Heart left ventricle (tissue), 16 donors: ENCODE measurements at regions of chr17 and their contacts with region 1.

Region 1: GRCh38 chr17:43170766-43171585 is at the start of gene NBR1:
- DNase-seq: peak; percentile 93 to 95 (median 95)
- ATAC-seq: peak; percentile 92 to 94 (median 94)
- H3K4me3 ChIP-seq: peak within 1 kb of the TSS; percentile 58 to 86 (median 78)
- H3K27ac ChIP-seq: peak within 1 kb of the TSS; percentile 90 to 99 (median 96)
- H3K4me1 ChIP-seq: peaks cover 2 to 60% (median 48%) of the 10 kb centered on the region in 12 donors
- H3K27me3 ChIP-seq: no peaks in the 10 kb centered on the region
- CTCF ChIP-seq: peak in 6 of 12 donors; percentile 11 to 47 (median 35)
- POLR2A ChIP-seq: peak; percentile 4 to 82
- total RNA-seq, gene NBR1: 82.6 to 146 (median 105) TPM

Region 2: GRCh38 chr17:42964161-42964932 is 206.6 kb before region 1 on chr17 and contains the start of gene AARSD1:
- intact Hi-C with region 1: no loop called
- DNase-seq: peak; percentile 91 to 94 (median 93)
- ATAC-seq: peak; percentile 96 to 99 (median 97)
- H3K4me3 ChIP-seq: peak within 1 kb of the TSS; percentile 40 to 96 (median 77)
- H3K27ac ChIP-seq: peak within 1 kb of the TSS in 11 of 12 donors; percentile 72 to 92 (median 87)
- H3K4me1 ChIP-seq: peaks cover 0 to 14% (median 6%) of the 10 kb centered on the region in 12 donors
- H3K27me3 ChIP-seq: no peaks in the 10 kb centered on the region
- CTCF ChIP-seq: peak in 1 of 12 donors; percentile 13
- POLR2A ChIP-seq: peak in 1 of 2 donors; percentile 70
- total RNA-seq, gene AARSD1: 19.5 to 33.3 (median 26.2) TPM

Region 3: DNA sequence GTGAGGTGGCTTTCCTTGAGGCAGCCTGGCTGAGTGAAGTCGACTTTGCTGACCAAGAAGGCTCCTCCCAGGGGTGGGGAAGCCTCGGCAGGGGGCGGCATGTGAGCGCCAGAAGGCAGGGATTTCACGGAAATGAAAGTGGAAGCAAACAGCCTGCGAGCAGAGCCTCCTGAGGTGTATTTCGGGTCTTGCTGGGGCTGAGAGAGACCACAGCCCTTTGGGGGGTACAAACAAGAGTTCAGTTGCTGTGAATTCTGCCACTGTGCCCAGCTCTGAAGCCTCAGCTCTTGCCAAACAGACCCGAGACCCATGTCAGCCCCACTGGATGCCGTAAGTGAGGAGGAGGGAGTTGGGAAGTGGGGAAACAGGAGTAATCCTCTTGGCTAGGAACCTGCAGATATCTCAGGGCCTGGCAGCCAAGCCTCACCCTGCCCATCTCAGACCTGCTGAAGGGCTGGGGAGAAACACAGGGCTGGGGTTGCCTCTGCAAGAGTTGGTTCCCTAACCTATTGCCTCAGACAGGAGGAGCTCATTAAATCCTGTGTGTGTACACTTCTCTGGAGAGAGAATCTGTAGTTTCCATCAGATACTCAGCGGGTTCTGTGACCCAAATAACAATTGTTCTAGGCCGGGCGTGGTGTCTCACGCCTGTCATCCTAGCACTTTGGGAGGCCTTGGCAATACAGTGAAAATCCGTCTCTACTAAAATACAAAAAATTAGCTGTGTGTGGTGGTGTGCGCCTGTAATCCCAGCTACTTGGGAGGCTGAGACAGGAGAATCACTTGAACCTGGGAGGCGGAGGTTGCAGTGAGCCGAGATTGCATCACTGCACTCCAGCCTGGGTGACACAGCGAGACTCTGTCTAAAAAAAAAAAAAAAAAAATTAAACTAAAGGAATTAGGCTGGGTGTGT is 164.1 kb before region 1 on chr17 and contains the start of gene IFI35:
- intact Hi-C with region 1: loop called in 2 of 10 experiments (anchors 5 kb)
- DNase-seq: peak; percentile 87 to 90 (median 89)
- ATAC-seq: peak; percentile 80 to 95 (median 85)
- H3K4me3 ChIP-seq: peak within 1 kb of the TSS; percentile 35 to 90 (median 72)
- H3K27ac ChIP-seq: peak within 1 kb of the TSS; percentile 39 to 95 (median 91)
- H3K4me1 ChIP-seq: peaks cover 2 to 58% (median 28%) of the 10 kb centered on the region in 12 donors
- H3K27me3 ChIP-seq: no peaks in the 10 kb centered on the region
- CTCF ChIP-seq: peak in 10 of 12 donors; percentile 25 to 78 (median 56)
- POLR2A ChIP-seq: peak in 1 of 2 donors; percentile 34
- total RNA-seq, gene IFI35: 8.4 to 66.7 (median 11.9) TPM

Region 4: DNA sequence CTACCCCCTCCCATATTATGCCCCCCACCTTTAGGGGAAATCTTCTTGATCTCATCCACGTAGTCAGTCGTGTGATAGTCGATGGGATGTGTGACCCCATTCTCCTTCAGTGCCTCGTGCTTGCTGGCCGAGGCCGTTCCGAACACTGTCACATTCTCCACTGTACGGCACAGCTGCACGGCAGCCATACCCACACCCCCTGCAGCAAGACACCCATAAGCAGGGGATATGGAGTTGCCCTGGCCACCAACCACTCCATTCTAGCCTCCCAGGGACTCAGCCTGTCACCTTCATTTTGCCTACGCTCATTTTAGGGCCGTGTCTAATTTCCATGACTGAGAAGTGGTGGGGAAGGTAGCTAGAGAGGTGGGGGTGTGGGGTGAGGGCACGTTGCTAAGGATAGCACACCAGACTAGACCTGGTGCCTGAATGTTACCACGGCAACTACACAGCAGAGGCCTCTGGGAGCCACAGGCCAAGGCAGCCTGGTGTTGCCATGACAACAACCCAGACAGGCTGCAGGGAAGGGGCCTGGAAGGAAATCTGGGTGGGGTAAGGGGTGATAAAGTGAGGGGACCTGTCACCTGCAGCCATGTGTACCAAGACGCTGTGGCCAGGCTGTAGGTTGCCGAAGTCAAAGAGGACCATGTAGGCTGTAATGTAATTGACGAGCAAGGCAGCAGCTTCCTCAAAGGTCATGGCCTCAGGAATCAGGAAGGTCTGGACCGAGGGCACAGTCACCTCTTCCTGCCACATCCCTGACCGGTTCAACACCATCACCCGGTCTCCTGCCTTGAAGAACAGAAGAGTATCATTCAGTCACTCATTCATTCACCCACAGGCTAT is 152.7 kb before region 1 on chr17:
- intact Hi-C with region 1: loop called in 5 of 10 experiments (anchors 5 to 10 kb)
- DNase-seq: no peak
- ATAC-seq: no peak
- H3K4me3 ChIP-seq: no peak overlapping the region
- H3K27ac ChIP-seq: peak overlapping the region in 7 of 12 donors; percentile 3 to 95 (median 91)
- H3K4me1 ChIP-seq: peaks cover 6 to 76% (median 63%) of the 10 kb centered on the region in 12 donors
- H3K27me3 ChIP-seq: no peaks in the 10 kb centered on the region
- CTCF ChIP-seq: no peak
- POLR2A ChIP-seq: no peak

Region 5: DNA sequence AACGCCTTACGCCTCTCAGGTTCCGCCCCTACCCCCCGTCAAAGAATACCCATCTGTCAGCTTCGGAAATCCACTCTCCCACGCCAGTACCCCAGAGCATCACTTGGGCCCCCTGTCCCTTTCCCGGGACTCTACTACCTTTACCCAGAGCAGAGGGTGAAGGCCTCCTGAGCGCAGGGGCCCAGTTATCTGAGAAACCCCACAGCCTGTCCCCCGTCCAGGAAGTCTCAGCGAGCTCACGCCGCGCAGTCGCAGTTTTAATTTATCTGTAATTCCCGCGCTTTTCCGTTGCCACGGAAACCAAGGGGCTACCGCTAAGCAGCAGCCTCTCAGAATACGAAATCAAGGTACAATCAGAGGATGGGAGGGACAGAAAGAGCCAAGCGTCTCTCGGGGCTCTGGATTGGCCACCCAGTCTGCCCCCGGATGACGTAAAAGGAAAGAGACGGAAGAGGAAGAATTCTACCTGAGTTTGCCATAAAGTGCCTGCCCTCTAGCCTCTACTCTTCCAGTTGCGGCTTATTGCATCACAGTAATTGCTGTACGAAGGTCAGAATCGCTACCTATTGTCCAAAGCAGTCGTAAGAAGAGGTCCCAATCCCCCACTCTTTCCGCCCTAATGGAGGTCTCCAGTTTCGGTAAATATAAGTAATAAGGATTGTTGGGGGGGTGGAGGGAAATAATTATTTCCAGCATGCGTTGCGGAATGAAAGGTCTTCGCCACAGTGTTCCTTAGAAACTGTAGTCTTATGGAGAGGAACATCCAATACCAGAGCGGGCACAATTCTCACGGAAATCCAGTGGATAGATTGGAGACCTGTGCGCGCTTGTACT is 45.6 kb before region 1 on chr17 and contains the start of gene BRCA1:
- intact Hi-C with region 1: loop called in 9 of 10 experiments (anchors 1 to 5 kb)
- DNase-seq: peak; percentile 89 to 94 (median 92)
- ATAC-seq: peak; percentile 100
- H3K4me3 ChIP-seq: peak within 1 kb of the TSS; percentile 15 to 95 (median 68)
- H3K27ac ChIP-seq: peak within 1 kb of the TSS; percentile 29 to 78 (median 72)
- H3K4me1 ChIP-seq: peaks cover 0 to 32% (median 10%) of the 10 kb centered on the region in 12 donors
- H3K27me3 ChIP-seq: no peaks in the 10 kb centered on the region
- CTCF ChIP-seq: peak in 1 of 12 donors; percentile 8
- POLR2A ChIP-seq: peak in 1 of 2 donors; percentile 42
- total RNA-seq, gene BRCA1: 4.8 to 11.7 (median 8.4) TPM

Region 6: DNA sequence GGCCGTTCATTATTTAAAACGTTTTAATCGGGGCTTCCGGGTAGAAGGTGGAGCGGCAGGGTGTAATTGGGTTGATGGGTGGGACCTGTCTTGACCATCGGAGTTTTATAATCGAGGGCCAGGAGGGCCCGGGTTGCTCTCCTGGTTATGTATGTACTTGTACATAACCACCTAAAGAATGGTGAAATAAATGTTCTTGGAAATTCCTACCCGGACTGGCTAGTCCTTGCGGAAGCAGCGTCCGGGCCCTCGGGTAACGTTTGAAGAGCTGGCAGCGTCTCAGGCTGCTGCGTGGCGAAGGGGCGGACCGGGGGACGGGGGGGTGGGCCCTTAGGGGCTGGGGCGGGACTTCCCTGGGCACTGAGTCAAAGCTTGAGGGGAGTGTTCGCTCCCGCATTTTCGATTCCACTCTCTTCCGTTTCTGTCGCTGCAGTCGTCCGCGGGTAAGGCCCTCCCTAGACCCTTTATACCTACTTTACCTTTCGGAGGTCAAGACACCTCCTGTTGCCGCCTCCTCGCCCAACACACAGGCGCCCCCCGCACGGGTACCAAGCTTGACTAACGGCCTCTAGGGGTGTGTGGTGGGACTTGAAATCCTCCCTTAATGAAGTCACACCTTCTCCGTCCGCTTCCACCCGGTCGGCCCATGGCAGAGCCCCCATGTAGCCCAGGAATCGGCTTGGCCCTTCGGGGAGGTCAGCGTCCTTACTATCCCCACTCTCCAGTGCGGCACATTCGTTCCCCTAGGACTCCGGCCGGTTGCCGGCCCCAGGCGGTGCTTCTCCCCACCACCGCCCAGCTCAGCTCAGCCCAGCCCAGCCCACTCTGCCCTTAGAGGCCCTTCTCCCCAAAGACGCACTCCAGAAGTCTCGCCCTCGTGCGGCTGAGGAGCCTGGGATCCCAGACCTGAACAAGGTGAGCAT is 40.8 kb after region 1 on chr17 and contains the start of gene TMEM106A:
- intact Hi-C with region 1: loop called in 1 of 10 experiments (anchors 5 kb)
- DNase-seq: peak; percentile 81 to 89 (median 84)
- ATAC-seq: peak; percentile 81 to 94 (median 90)
- H3K4me3 ChIP-seq: peak within 1 kb of the TSS; percentile 8 to 85 (median 65)
- H3K27ac ChIP-seq: peak within 1 kb of the TSS; percentile 26 to 95 (median 82)
- H3K4me1 ChIP-seq: peaks cover 0 to 35% (median 12%) of the 10 kb centered on the region in 12 donors
- H3K27me3 ChIP-seq: no peaks in the 10 kb centered on the region
- CTCF ChIP-seq: peak in 8 of 12 donors; percentile 9 to 52 (median 34)
- POLR2A ChIP-seq: no peak
- total RNA-seq, gene TMEM106A: 1.3 to 26.0 (median 2.0) TPM

Region 7: DNA sequence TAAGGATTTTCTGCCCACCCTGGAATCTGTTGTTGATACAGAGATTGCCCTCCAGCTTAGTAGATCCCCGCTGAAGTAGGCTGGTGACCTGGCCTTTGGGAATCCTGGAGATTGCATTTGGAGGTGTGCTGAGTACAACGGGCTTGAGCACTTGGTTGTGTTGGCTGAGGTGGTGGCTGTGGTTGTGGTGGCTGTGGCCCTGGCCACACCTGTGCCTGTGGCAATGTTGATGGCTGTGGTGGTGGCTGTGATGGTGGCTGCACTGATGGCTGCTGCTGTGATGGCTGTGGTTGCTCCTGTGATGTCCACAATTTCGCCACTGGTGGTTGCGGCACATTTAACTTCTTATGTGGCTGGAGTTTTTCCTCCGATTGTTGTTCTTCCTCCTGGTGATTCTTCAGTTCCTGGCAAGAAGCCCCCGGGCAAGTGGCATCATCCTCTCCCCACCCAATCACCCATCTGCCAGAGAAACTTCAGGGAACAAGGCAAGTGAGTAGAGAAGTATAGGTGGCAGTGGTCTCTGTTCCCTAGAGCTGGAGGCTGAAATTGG is 53.2 kb after region 1 on chr17:
- intact Hi-C with region 1: no loop called
- DNase-seq: peak in 1 of 5 donors; percentile 8
- ATAC-seq: no peak
- H3K4me3 ChIP-seq: no peak overlapping the region
- H3K27ac ChIP-seq: no peak overlapping the region
- H3K4me1 ChIP-seq: no peaks in the 10 kb centered on the region
- H3K27me3 ChIP-seq: no peaks in the 10 kb centered on the region
- CTCF ChIP-seq: no peak
- POLR2A ChIP-seq: no peak